Activated CD4-positive, alpha-beta memory T cell treated with anti-CD3 and anti-CD28 coated beads for 36 hours (primary cell): ENCODE measurements at regions of chr2 and their contacts with region 1.

Region 1: DNA sequence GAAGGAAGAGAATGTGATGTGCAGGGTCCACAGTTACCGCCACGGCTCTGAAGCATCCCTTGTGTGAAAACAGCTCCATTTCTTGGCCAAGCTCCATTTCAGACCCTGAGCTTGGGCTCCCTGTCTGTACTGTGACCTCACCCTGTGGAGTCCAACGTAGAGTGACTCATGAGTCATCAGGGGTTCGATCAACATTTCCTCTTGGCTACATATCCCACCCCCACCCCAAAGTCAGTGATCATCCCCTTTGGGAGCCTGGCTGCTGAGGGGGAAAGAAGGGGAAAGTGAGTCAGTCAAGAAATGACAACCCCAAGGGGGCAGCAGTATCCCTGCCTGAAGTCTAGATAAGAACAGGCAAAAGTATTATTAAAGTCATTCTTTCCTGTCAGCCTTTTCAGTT is 62.2 kb downstream of the PAPOLG start:
- DNase-seq: peak; percentile 74
- H3K4me3 Mint-ChIP-seq: no peak overlapping the region
- H3K27ac Mint-ChIP-seq: peak overlapping the region; percentile 97
- H3K4me1 Mint-ChIP-seq: peaks cover 46% of the 10 kb centered on the region
- H3K27me3 Mint-ChIP-seq: no peaks in the 10 kb centered on the region

Region 2: DNA sequence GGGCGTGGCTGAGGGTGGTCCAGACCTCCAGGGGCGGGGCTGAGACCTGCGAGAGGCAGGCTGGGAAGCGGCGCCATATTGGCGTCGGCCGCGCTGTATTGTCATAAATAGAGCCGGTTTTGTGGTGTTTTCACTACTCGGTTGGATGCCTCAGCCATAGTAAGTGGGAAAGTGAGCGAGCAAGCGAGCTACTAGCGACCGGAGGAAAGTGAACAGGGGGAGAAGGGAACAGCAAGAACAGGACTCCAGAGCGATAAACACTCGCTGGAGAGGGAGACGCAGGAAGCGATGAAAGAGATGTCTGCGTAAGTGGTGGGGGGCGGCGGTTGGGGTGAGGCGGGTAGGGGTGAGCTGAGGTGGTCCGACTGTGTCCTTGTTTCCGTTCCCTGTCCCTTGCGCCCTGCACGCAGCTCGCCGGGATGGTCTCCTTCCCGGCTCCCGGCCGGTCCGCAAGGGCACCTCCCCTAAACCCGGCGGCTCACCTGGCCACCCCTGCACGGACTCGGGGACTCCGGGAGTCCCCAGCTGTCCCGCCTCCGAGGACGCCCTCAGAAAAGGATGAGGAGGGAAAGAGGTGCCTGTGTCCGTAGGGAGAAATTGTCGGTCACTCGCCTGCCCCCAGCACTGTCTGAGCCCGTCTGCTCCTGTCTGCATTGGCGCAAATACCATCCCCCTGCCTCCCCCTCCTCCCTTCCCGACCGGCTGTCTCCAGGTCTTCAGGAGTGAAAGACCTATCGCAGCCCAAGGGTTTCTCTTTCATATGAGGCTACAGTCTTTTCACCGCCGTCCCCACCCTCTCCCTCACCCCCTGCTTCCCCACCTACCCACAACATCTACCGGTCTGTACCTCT is 61.9 kb before region 1 on chr2 and contains the start of gene PAPOLG:
- CTCF ChIA-PET with region 1: no interaction called
- POLR2A ChIA-PET with region 1: no interaction called
- intact Hi-C with region 1: loop called (anchors 1 kb)
- DNase-seq: peak; percentile 98
- H3K4me3 Mint-ChIP-seq: peak within 1 kb of the TSS; percentile 99
- H3K27ac Mint-ChIP-seq: peak within 1 kb of the TSS; percentile 96
- H3K4me1 Mint-ChIP-seq: peaks cover 39% of the 10 kb centered on the region
- H3K27me3 Mint-ChIP-seq: no peaks in the 10 kb centered on the region
- total RNA-seq, gene PAPOLG: 14.4 to 15.7 TPM

Region 3: GRCh38 chr2:60806988-60807681 is 11.1 kb before region 1 on chr2:
- CTCF ChIA-PET with region 1: interaction called, 36 read pairs
- POLR2A ChIA-PET with region 1: interaction called, 3 read pairs
- intact Hi-C with region 1: loop called (anchors 1 kb)
- DNase-seq: peak; percentile 81
- H3K4me3 Mint-ChIP-seq: peak overlapping the region; percentile 36
- H3K27ac Mint-ChIP-seq: peak overlapping the region; percentile 88
- H3K4me1 Mint-ChIP-seq: peaks cover 49% of the 10 kb centered on the region
- H3K27me3 Mint-ChIP-seq: no peaks in the 10 kb centered on the region

Region 4: DNA sequence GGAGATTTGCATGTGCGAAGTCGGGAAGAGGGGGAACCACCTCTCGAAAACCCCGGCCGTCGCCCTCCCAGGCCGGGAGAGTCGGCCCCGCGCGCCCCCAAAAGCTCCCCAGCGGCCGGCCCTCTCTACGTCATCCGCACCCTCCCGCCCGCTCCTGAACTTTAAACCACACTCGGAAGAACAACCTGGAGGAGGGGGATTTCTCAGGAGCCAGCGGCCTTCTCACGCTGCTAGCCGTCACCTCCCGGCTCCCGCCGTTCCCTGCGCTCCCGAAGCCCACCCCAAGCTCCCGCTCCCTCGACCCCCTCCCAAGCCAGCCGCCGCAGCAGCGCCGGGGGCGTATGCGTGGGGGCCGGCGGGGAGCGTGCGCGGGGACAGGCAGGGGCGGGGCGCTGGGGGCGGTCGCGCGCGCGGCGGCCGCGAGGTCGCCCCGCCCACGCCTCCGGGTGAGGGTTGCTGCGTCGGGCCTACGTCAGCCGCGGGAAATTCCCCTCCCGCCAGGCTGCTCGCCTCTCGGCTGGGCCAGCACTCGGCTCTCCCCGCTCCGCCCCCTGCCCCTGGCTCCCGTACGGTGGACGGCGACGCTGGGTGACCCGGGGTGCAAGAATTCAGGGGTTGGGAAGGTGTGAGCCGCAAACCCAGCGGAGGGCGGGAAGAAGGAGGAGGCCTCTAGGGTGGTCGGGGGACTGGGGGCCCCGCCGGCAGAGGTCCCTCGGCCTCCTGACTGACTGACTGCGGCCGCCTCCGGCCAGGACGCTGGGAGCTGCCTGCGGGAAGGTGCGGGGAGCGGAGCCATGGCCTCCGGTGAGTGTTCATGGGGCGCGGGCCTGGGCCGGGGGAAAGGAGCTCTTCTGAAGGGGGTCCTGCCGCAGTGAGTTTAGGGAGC is 63.0 kb after region 1 on chr2 and contains the start of gene REL:
- CTCF ChIA-PET with region 1: interaction called, 9 read pairs
- POLR2A ChIA-PET with region 1: interaction called, 27 read pairs
- intact Hi-C with region 1: loop called (anchors 1 kb)
- DNase-seq: peak; percentile 94
- H3K4me3 Mint-ChIP-seq: peak within 1 kb of the TSS; percentile 100
- H3K27ac Mint-ChIP-seq: peak within 1 kb of the TSS; percentile 96
- H3K4me1 Mint-ChIP-seq: peaks cover 27% of the 10 kb centered on the region
- H3K27me3 Mint-ChIP-seq: no peaks in the 10 kb centered on the region
- total RNA-seq, gene REL: 37.1 to 38.1 TPM

Region 5: GRCh38 chr2:60998628-60999545 is 180.6 kb after region 1 on chr2:
- CTCF ChIA-PET with region 1: interaction called, 8 read pairs
- POLR2A ChIA-PET with region 1: no interaction called
- intact Hi-C with region 1: loop called (anchors 1 kb)
- DNase-seq: no peak
- H3K4me3 Mint-ChIP-seq: no peak overlapping the region
- H3K27ac Mint-ChIP-seq: no peak overlapping the region
- H3K4me1 Mint-ChIP-seq: no peaks in the 10 kb centered on the region
- H3K27me3 Mint-ChIP-seq: no peaks in the 10 kb centered on the region